SK-N-SH (cell line): ENCODE measurements at regions of chr10 and their contacts with region 1.

Region 1: DNA sequence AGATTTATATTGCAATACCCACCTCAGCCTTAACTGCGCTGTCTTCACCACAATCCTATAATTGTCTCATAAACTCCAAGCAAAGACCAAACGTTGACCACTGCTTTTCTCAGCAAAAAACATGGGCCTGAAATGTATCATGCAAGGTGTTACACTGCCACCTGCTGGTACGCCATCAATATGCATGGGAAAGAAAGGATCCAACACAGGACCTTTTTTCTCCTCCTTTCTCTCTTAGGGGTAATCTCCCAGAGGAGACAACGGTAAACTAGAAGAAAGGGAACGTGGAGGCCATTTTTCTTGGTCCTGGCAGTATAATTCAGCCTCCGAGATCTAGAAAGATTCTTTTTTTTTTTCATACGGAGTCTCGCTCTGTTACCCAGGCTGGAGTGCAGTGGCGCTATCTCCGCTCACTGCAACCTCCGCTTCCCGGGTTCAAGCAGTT is 79.1 kb upstream of the MPP7 start:
- DNase-seq: peak; percentile 62
- H3K4me3 ChIP-seq: peak overlapping the region in 1 of 2 experiments; percentile 32; a peak in 1 of 4 replicates
- H3K27ac ChIP-seq: no peak overlapping the region
- H3K4me1 ChIP-seq: no peaks in the 10 kb centered on the region
- H3K27me3 ChIP-seq: peaks cover 42% of the 10 kb centered on the region; the same call in 1 of the 2 replicates
- CTCF ChIP-seq: peak; percentile 96
- EP300 ChIP-seq: no peak
- RAD21 ChIP-seq: peak; percentile 89

Region 2: GRCh38 chr10:28250782-28251181 is 131.1 kb before region 1 on chr10:
- CTCF ChIA-PET with region 1: interaction called, 29 read pairs
- POLR2A ChIA-PET with region 1: no interaction called
- DNase-seq: no peak
- H3K4me3 ChIP-seq: no peak overlapping the region
- H3K27ac ChIP-seq: no peak overlapping the region
- H3K4me1 ChIP-seq: peaks cover 0 to 11% of the 10 kb centered on the region in 2 experiments; a peak in 2 of 4 replicates
- H3K27me3 ChIP-seq: peaks cover 23% of the 10 kb centered on the region; the same call in 1 of the 2 replicates
- CTCF ChIP-seq: peak; percentile 68
- EP300 ChIP-seq: no peak
- RAD21 ChIP-seq: peak; percentile 61

Region 3: DNA sequence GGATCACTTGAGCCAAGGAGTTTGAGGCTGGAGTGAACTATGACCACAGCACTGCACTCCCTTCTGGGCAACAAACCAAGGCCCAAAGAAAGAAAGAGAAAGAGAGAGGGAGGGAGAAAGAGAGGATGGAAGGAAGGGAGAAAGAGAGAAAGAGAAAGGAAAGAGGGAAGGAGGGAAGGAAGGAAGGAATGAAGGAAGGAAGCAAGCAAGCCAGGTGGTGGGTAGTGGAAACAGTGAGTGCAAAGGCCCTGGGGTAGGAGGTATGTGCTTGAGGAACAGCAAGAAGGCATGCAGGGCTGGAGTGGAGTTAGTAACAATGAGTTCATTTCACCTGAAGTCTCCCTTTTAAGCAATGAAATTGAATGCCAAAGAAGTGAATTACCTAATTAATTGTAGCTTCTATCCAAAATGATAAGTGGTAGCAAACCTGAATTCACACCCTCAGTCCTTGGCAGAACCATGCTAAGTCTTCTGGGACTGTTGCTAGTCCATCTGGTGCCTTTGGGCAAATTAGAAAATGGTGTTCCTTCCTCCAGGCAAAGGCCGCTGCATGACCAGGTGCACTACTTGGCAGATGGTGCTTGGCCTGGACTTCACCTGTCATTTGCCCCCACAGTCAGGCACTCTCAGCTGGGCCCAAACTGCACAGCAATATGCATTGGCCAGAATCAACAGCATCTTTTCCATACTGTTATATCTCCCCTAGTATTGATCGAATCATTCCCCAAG is 11.7 kb before region 1 on chr10:
- CTCF ChIA-PET with region 1: interaction called, 19 read pairs
- POLR2A ChIA-PET with region 1: no interaction called
- DNase-seq: no peak
- H3K4me3 ChIP-seq: no peak overlapping the region
- H3K27ac ChIP-seq: no peak overlapping the region
- H3K4me1 ChIP-seq: no peaks in the 10 kb centered on the region
- H3K27me3 ChIP-seq: peaks cover 25% of the 10 kb centered on the region; the same call in 1 of the 2 replicates
- CTCF ChIP-seq: no peak
- EP300 ChIP-seq: no peak
- RAD21 ChIP-seq: no peak

Region 4: DNA sequence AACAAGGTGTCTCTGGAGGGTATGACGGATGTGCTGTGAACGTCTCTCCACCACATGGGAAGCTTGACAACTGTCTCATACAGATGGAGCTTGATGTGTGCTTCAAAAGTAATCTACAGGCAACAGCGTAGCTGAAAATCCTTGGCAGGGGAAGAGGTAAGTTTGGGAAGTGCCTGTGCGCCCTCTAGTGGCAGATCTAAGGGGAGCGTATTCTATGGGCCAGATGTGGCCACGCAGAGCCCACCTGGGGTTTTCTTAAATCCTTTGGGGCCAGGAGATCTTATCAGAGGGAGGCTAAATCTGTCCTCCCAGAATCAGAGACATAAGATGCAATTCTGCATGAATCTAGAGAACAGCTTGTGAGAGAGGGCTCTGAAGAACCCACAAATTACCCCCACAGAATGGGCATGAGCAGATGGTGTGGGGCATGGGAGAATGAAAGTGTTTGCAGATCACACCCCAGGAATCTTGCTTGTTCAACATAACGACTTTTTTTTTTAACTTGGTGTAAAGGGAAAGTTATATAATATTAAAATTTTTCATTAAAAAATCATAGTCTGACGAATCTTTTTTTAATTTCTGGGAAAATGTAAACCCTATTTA is 12.1 kb after region 1 on chr10:
- CTCF ChIA-PET with region 1: interaction called, 43 read pairs
- POLR2A ChIA-PET with region 1: no interaction called
- DNase-seq: peak; percentile 69
- H3K4me3 ChIP-seq: peak overlapping the region in 1 of 2 experiments; percentile 24; a peak in 1 of 4 replicates
- H3K27ac ChIP-seq: no peak overlapping the region
- H3K4me1 ChIP-seq: no peaks in the 10 kb centered on the region
- H3K27me3 ChIP-seq: peaks cover 16% of the 10 kb centered on the region; the same call in 1 of the 2 replicates
- CTCF ChIP-seq: peak; percentile 96
- EP300 ChIP-seq: no peak
- RAD21 ChIP-seq: peak; percentile 61

Region 5: GRCh38 chr10:28432210-28432676 is 50.3 kb after region 1 on chr10:
- CTCF ChIA-PET with region 1: no interaction called
- POLR2A ChIA-PET with region 1: no interaction called
- DNase-seq: peak; percentile 79
- H3K4me3 ChIP-seq: no peak overlapping the region; a peak in 1 of 4 replicates
- H3K27ac ChIP-seq: no peak overlapping the region
- H3K4me1 ChIP-seq: no peaks in the 10 kb centered on the region; a peak in 1 of 4 replicates
- H3K27me3 ChIP-seq: no peaks in the 10 kb centered on the region; the same call in 1 of the 2 replicates
- CTCF ChIP-seq: peak; percentile 80
- EP300 ChIP-seq: no peak
- RAD21 ChIP-seq: peak; percentile 91